Mammary epithelial cell (primary cell): ENCODE measurements at regions of chr12 and their contacts with region 1.

Region 1: DNA sequence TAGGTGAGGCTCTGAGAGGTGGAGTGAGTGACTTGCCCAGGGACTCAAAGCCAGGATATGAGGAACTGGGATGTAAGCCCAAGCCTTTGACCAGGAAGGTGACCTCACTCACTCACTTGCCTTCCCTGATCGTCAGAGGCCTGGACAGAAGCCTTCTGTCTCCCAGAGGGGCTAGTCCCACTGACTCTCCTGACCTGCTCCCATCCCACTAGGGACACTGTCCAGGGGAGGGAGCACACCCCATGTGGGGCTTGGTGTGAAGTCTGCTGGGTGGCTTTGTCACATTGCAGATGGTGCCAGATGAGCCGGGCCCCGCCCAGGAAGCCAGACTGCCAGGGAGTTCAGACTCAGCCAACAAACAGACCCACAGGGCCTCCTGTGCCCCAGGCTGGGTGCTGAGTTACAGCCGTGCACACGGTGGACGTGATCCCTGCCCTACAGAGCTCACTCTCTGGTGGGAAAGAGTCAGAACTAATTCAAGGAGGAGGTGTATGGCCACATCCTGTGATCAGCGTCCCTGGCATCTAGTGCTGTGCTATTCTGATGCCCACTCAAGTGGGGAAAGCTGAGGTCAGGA is 28.3 kb downstream of the MMAB start:
- DNase-seq: peak; percentile 11
- H3K4me3 ChIP-seq: no peak overlapping the region
- H3K27ac ChIP-seq: no peak overlapping the region
- H3K4me1 ChIP-seq: peaks cover 25% of the 10 kb centered on the region
- H3K27me3 ChIP-seq: no peaks in the 10 kb centered on the region
- CTCF ChIP-seq: no peak

Region 2: GRCh38 chr12:108649669-108650068 is 895.4 kb before region 1 on chr12:
- CTCF ChIA-PET with region 1: no interaction called
- dilution Hi-C with region 1: no loop called
- in situ Hi-C with region 1: no loop called
- intact Hi-C with region 1: loop called (anchors 5 kb)
- DNase-seq: peak; percentile 75
- H3K4me3 ChIP-seq: no peak overlapping the region
- H3K27ac ChIP-seq: no peak overlapping the region
- H3K4me1 ChIP-seq: peaks cover 14% of the 10 kb centered on the region
- H3K27me3 ChIP-seq: no peaks in the 10 kb centered on the region
- CTCF ChIP-seq: no peak

Region 3: GRCh38 chr12:109488051-109488665 is 56.9 kb before region 1 on chr12:
- CTCF ChIA-PET with region 1: no interaction called
- dilution Hi-C with region 1: no loop called
- in situ Hi-C with region 1: no loop called
- intact Hi-C with region 1: no loop called
- DNase-seq: no peak
- H3K4me3 ChIP-seq: no peak overlapping the region
- H3K27ac ChIP-seq: no peak overlapping the region
- H3K4me1 ChIP-seq: no peaks in the 10 kb centered on the region
- H3K27me3 ChIP-seq: no peaks in the 10 kb centered on the region
- CTCF ChIP-seq: no peak

Region 4: DNA sequence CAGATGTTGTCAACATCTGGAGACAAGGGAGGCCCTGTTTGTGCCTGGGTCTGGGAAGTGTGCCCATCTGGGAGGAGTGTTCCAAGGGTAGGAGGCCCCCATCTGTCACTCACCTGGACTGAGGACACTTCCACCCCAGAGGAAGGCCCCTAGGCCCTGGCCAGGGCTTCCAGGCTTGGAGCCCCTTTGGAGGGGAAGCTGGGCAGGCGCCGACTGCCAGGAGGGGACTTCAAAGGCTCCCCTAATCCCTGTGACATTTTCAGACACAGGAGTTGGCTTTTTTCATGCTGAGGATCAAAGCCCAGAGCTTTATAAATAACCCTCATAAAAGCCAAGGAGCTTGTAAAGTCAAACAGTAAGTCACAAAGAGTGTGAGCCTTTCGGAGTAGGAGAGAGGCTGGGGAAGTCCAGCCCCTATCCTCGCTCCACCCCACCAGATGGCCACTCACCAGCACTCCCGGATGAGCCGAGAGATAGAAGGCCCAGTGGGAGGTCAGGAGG is 151.0 kb after region 1 on chr12:
- CTCF ChIA-PET with region 1: no interaction called
- dilution Hi-C with region 1: no loop called
- in situ Hi-C with region 1: no loop called
- intact Hi-C with region 1: no loop called
- DNase-seq: no peak
- H3K4me3 ChIP-seq: no peak overlapping the region
- H3K27ac ChIP-seq: no peak overlapping the region
- H3K4me1 ChIP-seq: no peaks in the 10 kb centered on the region
- H3K27me3 ChIP-seq: no peaks in the 10 kb centered on the region
- CTCF ChIP-seq: no peak